ENCODE measurements at regions of chr1 and their contacts with region 1.

Region 1: GRCh38 chr1:6889875-6890480 is 104.7 kb downstream of the CAMTA1 start:
- DNase-seq: peak in 2 of 3 donors; percentile 73 to 82
- ATAC-seq: peak; percentile 97
- H3K4me3 ChIP-seq: no peak overlapping the region
- H3K4me1 ChIP-seq: no peaks in the 10 kb centered on the region
- CTCF ChIP-seq: peak; percentile 56

Region 2: DNA sequence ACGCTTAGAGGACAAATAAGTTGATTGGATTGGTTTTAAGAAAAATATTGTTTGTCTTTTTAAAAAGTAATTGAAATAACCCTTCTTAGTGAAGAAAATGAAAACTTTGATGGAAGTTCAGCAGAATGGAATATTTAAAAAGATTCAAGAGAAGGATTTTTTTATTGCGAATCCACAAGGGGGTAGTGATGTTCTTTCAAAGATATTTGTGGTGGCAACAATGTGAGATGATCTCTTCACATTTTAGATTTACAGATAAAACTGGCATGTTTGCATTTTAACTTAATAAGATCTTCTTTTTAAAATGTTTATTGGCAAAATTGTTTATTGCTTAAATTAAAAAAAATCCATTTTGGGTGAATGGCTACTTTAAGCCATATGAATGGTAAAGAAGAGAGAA is 95.8 kb before region 1 on chr1:
- intact Hi-C with region 1: loop called in 1 of 2 experiments (anchors 10 kb)
- DNase-seq: no peak
- ATAC-seq: no peak
- H3K4me3 ChIP-seq: no peak overlapping the region
- H3K4me1 ChIP-seq: no peaks in the 10 kb centered on the region
- CTCF ChIP-seq: no peak

Region 3: DNA sequence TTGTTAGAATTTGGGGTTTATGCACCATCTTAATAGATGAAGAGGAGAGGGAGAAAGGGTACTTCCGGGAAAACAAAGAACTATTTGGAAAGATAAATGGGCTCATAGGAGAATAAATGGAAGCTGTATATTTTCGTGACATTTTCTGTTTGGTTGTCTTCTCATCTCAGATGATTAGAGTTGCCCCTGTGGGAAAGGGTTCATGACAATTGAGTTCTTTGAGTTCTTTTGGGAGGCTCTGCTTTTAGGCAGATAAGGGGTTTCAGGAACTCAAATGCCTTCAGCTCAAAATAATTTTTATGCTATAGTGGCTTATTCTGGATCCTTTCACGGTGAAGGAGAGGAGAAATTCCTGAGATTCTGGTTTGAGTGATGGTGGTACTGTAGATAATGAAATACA is 41.2 kb before region 1 on chr1:
- intact Hi-C with region 1: loop called in 1 of 2 experiments (anchors 5 kb)
- DNase-seq: no peak
- ATAC-seq: no peak
- H3K4me3 ChIP-seq: no peak overlapping the region
- H3K4me1 ChIP-seq: no peaks in the 10 kb centered on the region
- CTCF ChIP-seq: no peak

Measured in mucosa of descending colon (tissue), 3 donors.